ENCODE measurements at regions of chrX and their contacts with region 1.

Region 1: GRCh38 chrX:151396825-151397740 is at the start of gene VMA21:
- DNase-seq: peak; percentile 79
- H3K4me3 Mint-ChIP-seq: peak within 1 kb of the TSS; percentile 93
- H3K27ac Mint-ChIP-seq: peak within 1 kb of the TSS; percentile 94
- H3K4me1 Mint-ChIP-seq: peaks cover 52% of the 10 kb centered on the region
- H3K27me3 Mint-ChIP-seq: peaks cover 3% of the 10 kb centered on the region
- total RNA-seq, gene VMA21: 39.4 and 49.2 TPM in 2 replicates

Region 2: DNA sequence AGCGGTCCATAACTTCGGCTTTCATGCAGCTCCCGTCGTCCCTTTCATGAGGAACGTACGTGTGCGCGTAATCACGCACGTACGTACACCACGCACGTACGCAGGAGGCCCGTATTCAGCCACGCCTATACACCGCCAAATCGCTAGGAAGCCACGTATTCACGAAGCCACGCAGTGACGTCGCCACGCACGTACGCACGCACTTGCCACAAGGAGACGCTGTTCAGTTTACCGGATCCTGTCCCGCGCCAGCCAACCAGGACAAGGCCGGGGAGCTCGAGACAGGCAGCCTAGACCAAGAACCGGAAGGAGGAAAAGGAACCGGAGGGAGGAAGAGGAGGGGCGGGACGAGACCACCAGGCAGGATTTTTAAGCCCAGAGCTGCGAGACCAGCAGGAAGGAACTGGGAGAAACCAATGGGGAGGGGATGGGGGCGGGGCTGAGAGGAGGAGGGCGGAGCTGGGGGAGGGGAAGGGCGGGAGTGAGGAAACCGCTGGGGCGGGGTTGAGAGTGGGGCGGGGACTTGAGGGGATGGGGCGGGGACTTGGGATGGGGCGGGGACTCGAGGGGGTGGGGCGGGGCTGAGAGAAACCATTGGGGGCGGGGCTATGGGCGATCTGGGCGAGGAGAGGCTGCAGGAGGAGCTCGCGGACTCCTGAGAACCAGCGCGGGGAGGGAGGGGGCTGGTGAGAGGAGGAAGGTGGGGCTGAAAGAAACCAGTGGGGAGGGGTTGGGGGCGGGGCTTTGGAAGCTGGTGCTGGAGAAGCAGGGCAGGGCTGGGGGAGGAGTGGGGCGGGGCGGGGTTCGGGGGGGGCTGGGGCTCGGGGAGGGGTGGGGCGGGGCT is 1458.4 kb before region 1 on chrX and contains the start of gene EOLA2:
- intact Hi-C with region 1: loop called (anchors 10 kb)
- DNase-seq: peak; percentile 89
- H3K4me3 Mint-ChIP-seq: peak within 1 kb of the TSS; percentile 92
- H3K27ac Mint-ChIP-seq: peak within 1 kb of the TSS; percentile 100
- H3K4me1 Mint-ChIP-seq: peaks cover 4% of the 10 kb centered on the region
- H3K27me3 Mint-ChIP-seq: no peaks in the 10 kb centered on the region
- total RNA-seq, gene EOLA2: 54.2 and 63.3 TPM in 2 replicates

Region 3: DNA sequence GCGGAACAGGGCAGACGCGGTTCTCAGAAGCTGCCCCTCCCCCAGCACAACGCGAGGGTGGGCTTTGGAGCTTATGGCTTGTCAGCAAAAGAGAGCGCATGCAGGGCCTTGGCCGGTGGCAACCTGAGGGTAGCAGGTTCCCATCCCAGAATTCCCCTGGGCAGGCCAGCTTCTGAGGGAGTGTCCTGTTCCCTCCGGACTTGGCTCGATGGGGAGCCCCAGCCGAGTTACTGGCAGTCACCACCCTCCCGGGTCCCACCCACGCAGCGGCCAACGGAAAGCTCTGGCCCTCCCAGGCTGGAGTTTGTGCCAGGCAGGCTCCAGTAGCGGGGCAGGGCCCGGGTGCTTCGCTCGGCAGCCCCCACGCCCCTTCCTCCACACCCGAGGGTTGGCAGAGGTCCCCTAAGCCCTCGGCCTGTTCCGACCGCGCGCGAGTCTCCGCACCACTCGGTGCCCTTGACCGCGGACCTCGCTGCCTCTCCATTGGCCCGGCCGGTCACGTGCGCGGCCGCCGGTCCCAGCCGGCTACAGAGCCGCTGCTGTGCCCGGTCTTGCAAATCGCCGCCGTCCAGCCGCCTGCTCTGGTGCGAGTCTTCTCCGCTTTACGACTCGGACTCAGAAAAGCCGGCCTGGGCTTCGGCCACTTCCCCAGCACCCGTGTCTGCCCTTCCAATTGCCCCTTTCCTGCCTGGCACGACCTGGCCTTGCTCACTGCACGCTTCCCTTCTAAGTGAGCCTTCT is 849.5 kb before region 1 on chrX:
- intact Hi-C with region 1: loop called (anchors 5 kb)
- DNase-seq: no peak
- H3K4me3 Mint-ChIP-seq: peak overlapping the region; percentile 30
- H3K27ac Mint-ChIP-seq: peak overlapping the region; percentile 80
- H3K4me1 Mint-ChIP-seq: peaks cover 26% of the 10 kb centered on the region
- H3K27me3 Mint-ChIP-seq: no peaks in the 10 kb centered on the region

Region 4: GRCh38 chrX:152830312-152831305 is 1433.5 kb after region 1 on chrX and contains the starts of genes CETN2 and NSDHL:
- intact Hi-C with region 1: loop called (anchors 2 kb)
- DNase-seq: peak; percentile 91
- H3K4me3 Mint-ChIP-seq: peak within 1 kb of the TSS; percentile 94
- H3K27ac Mint-ChIP-seq: peak within 1 kb of the TSS; percentile 90
- H3K4me1 Mint-ChIP-seq: peaks cover 19% of the 10 kb centered on the region
- H3K27me3 Mint-ChIP-seq: no peaks in the 10 kb centered on the region
- total RNA-seq, gene CETN2: 9.0 and 9.8 TPM in 2 replicates
- total RNA-seq, gene NSDHL: 24.0 and 24.9 TPM in 2 replicates